ENCODE measurements at regions of chr2 and their contacts with region 1.

Region 1: DNA sequence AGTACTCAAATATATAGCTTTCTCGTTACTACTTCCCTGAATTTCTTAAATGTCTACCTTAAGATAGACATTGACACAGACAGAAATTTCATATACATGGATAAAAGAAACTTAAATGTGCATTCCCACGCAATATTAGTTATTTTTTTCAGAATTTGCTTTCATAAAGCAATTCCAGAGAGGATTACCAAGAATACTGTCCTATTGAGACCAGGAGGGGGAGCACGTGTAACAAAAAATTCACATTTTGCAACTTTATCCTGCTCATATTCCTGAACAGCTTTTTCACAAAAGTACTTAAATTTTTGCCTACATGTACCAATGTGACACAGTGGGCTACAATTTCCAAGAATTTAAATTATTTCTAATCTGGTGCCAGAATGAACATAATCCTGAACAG is 30.7 kb upstream of the ERCC3 start:
- DNase-seq: peak; percentile 14 to 62
- H3K4me3 ChIP-seq: no peak overlapping the region
- H3K27ac ChIP-seq: no peak overlapping the region
- H3K4me1 ChIP-seq: no peaks in the 10 kb centered on the region
- H3K27me3 ChIP-seq: no peaks in the 10 kb centered on the region
- CTCF ChIP-seq: peak; percentile 91

Region 2: GRCh38 chr2:127064642-127065250 is 259.9 kb before region 1 on chr2:
- CTCF ChIA-PET with region 1: no interaction called
- POLR2A ChIA-PET with region 1: no interaction called
- intact Hi-C with region 1: no loop called
- DNase-seq: peak; percentile 99
- H3K4me3 ChIP-seq: no peak overlapping the region
- H3K27ac ChIP-seq: peak overlapping the region; percentile 73
- H3K4me1 ChIP-seq: peaks cover 32% of the 10 kb centered on the region
- H3K27me3 ChIP-seq: no peaks in the 10 kb centered on the region
- CTCF ChIP-seq: peak; percentile 54; the same call in 1 of the 2 replicates

Region 3: DNA sequence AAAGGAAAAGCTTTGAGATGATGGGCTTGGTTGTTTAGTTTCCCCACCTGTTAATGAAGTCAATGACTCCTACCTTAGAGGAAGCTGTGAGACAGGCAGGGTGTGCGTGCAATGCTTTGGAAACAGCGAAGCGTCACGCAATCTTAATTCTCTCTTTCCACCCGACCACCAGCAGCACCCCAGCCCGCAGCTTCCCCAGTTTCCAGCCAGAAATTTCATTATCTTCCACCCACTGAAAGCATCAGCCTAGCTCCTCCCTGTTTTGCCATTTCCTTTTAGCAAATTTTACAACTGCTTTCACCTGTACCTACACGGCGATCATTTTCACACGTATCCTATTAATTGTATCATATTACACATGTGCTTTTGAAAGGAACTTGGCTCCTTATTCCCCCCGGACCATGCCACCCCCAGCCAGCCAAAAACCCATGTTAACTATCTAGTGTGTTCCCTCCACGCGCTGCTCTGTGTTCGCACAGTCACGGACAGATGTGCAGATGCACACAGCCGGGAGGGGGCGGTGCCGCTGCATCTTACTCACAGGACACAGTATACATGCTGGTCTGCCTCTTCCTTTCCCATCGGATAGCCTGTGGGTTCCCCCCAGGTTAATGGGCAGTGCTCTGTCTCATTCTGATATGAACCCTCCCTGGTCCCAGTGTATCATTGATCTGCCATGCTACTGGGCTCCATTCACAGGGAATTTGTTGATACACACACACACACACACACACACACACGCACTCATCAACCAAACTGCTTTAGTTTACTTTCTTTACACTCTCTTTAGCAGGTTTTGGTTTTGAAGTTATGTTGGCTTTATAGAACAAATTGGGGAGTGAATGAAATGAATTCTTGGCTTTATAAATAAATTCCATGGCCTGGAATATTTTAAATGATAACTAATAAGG is 126.9 kb before region 1 on chr2:
- CTCF ChIA-PET with region 1: interaction called, 6 read pairs
- POLR2A ChIA-PET with region 1: no interaction called
- intact Hi-C with region 1: loop called (anchors 2 kb)
- DNase-seq: peak; percentile 71 to 83
- H3K4me3 ChIP-seq: no peak overlapping the region
- H3K27ac ChIP-seq: no peak overlapping the region
- H3K4me1 ChIP-seq: no peaks in the 10 kb centered on the region
- H3K27me3 ChIP-seq: no peaks in the 10 kb centered on the region
- CTCF ChIP-seq: peak; percentile 88

Region 4: DNA sequence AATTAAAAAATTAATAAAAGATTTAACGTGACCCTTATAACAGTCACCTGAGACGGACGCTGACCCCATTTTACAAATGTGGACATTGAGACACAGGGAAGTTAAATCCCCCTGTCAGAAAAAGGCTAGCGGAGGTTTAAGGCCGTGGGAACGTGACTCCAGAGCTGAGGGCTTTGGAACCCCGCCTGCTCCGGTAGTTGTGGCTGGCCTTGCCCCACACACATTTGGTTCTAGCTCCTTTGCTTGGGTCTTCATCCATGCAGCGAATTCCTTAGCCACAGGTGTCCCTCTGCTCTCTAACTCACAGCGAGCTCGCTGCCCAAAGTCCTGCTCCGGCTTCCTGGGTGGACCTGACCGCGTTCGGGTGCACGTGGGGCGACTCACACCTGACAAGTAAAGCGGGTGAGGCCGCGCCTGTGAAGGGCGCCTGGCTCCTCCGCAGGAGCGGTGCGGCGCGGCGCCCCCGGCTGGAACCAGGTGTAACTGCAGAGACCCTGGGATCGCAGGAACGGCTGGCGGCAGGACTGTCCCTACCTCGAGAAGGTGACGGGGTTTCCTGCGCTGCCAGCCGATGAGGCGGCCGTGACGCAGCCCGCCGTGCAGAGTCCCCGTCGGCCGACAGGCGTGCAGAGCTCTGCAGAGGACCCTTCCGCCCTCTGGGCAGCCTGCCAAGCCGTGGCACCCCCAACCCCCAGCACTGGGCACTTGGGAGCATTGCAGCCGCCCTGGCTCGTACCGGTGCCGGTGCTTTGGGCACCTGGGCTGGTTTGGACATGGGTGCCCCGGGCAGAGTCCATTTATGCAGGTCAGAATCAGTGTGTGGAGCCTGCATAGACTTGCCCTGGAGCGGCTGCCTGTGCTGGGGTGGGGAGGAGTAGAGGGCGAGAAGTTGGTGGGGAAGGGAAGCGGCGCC is 91.2 kb after region 1 on chr2:
- CTCF ChIA-PET with region 1: no interaction called
- POLR2A ChIA-PET with region 1: interaction called, 3 read pairs
- intact Hi-C with region 1: loop called (anchors 10 kb)
- DNase-seq: peak; percentile 74 to 87
- H3K4me3 ChIP-seq: peak overlapping the region; percentile 50
- H3K27ac ChIP-seq: no peak overlapping the region
- H3K4me1 ChIP-seq: peaks cover 61% of the 10 kb centered on the region
- H3K27me3 ChIP-seq: no peaks in the 10 kb centered on the region
- CTCF ChIP-seq: peak; percentile 81

Region 5: GRCh38 chr2:127437781-127438726 is 113.4 kb after region 1 on chr2:
- CTCF ChIA-PET with region 1: no interaction called
- POLR2A ChIA-PET with region 1: no interaction called
- intact Hi-C with region 1: no loop called
- DNase-seq: no peak
- H3K4me3 ChIP-seq: no peak overlapping the region
- H3K27ac ChIP-seq: no peak overlapping the region
- H3K4me1 ChIP-seq: no peaks in the 10 kb centered on the region
- H3K27me3 ChIP-seq: no peaks in the 10 kb centered on the region
- CTCF ChIP-seq: no peak

Region 6: DNA sequence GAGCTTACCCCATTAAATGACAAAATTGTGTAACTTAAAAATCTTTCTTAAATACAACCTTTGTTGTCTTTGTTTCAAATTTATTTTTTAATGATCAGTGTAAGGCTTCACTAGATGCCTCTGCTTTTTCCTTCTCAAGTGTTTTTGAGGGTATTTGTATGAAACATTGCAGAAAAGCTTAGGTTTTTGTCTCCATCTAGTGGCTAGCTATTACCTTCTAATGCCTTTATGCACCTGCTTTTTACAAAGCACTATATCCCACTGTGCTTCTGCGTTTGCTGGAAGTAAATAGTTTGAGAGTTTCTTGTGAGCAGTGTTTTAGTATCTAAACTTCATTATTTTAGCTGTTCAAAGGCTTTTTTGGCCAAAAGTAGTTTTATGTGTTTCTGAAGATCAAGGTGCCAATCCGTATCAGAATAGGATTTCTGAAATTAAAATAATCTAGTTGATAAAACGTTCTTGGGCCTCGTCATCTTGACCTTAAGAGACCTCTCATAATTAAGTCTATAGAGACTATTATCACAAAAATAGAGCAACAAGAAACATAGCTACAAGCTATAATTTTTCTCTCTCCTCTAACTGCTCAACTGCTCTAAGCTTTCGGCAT is 154.7 kb after region 1 on chr2:
- CTCF ChIA-PET with region 1: interaction called, 14 read pairs
- POLR2A ChIA-PET with region 1: no interaction called
- intact Hi-C with region 1: loop called (anchors 1 kb)
- DNase-seq: peak in 1 of 2 experiments; percentile 55
- H3K4me3 ChIP-seq: no peak overlapping the region
- H3K27ac ChIP-seq: no peak overlapping the region
- H3K4me1 ChIP-seq: no peaks in the 10 kb centered on the region
- H3K27me3 ChIP-seq: no peaks in the 10 kb centered on the region
- CTCF ChIP-seq: peak; percentile 91

Region 7: DNA sequence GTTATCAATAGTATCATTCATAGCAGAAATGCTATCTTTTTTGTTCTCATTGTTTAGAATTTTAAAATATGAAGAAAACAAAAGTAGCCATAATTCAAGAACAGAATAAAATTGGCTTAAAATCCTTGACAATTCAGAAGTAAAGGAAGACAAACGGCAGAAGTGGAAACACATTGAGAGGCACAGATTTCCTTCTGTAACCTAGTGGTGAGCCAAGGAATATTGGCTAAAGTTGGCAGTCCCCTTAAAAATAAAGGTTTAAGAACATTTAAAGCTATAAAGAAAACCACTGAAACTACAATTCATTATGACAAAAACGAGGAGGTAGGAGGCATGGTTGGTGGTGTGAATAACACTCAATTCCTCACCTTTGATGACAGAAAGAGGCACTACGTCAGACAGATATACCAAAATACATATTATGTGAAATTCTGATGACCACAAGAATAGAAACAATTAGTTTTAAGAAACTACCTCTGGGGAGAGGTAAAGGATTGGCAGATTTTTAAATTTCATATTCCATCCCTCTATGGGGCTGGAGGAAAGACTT is 418.9 kb after region 1 on chr2:
- CTCF ChIA-PET with region 1: no interaction called
- POLR2A ChIA-PET with region 1: no interaction called
- intact Hi-C with region 1: no loop called
- DNase-seq: no peak
- H3K4me3 ChIP-seq: no peak overlapping the region
- H3K27ac ChIP-seq: no peak overlapping the region
- H3K4me1 ChIP-seq: no peaks in the 10 kb centered on the region
- H3K27me3 ChIP-seq: no peaks in the 10 kb centered on the region
- CTCF ChIP-seq: no peak

Measured in PC-9 (cell line).